GM10248 (cell line): ENCODE measurements at regions of chr17 and their contacts with region 1.

Region 1: GRCh38 chr17:49515196-49515770 is 20.2 kb downstream of the NGFR start:
- DNase-seq: peak; percentile 88
- CTCF ChIP-seq: no peak

Region 2: DNA sequence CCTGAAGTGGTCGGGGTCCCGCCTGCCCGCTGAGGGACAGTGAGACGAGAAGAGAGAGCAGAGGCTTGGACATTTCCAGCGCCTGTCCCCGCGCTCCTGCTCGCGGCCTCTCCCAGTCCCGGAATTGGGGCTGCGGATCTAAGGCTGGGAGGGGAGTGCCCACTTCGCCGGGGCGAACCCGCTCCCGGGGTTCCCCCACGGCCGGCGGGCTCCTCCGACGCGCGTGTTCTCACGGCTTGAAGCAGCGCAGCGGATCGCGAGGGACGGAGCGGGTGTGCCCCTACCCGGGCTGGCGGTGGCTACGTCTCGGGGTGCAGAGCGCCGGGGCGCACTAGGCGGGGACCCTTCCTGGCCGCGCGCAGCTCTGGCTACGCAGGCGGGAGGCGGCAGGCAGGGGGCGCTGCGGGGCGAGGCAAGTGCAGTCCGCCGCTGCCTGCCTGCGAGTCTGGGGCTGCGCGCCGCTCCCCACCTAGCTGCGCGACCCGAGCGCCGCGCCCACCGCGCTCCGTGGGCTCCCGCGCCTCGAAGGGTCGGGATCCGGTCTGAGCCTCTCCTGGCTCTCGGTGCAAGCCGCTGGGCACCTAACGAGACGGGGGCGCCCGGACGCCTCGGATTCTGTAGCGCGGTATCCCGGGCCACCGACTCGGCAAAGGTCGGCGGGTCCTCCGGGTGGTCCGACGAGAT is 19.0 kb before region 1 on chr17:
- CTCF ChIA-PET with region 1: interaction called, 95 read pairs
- POLR2A ChIA-PET with region 1: no interaction called
- DNase-seq: peak; percentile 89
- CTCF ChIP-seq: peak; percentile 92

Region 3: DNA sequence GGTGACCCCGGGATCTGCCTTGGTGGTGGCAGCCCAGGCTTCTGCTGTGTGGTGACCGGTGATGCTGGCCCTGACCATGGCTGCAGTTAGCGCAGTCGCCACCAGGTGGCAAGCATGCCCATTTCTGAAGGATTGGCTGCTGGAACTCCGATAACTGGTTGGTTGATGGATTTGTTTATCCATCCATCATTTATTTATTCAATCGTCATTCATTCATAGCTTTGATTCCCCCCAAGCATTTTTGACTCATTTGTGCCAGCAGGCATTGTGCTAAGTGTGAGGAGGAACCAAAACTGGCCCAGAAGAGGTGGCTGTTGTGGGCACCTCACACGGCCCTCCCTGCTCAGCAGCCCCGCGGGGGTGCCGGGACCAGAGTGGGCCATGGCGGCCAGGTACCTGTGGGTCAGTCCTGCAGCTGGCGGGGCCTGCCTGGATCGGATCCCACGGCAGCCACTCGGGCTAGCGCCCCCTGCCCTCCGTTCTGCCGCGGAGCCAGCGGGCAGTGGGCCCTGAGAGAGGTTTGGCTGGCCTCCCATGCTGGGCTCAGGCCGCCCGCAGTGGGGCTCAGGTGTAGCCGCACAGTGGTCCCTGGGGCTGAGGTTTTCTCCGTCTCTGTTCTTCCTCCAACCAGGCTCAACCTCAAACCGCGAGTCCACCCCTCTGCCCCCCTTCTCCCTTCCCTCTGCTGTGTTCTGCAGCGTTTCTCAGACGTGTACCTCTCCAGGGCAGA is 511.8 kb after region 1 on chr17:
- CTCF ChIA-PET with region 1: no interaction called
- POLR2A ChIA-PET with region 1: no interaction called
- DNase-seq: peak; percentile 88
- CTCF ChIP-seq: peak; percentile 97